ENCODE measurements at regions of chr5 and their contacts with region 1.

Region 1: DNA sequence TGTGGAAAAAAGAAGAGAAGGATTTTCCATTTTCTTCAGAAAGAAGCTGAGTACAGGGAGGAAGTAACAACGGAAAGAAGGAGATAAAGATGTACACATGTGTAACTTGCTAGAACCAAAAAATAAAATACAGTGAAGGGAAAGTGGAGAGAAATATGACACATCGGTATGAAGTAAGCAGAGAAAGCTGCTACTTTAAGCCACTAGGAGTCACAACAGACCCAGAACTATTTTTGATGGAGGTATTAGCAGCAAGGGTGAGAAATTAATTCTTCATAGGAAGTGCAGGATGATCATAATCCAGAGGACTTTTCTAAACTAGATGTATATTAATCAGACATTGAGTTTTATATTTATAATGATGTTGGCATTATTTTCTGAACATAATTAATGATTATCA is 88.5 kb downstream of the FAM174A start:
- DNase-seq: peak in 1 of 2 donors; percentile 61
- ATAC-seq: peak; percentile 58 to 74 (median 62)
- H3K4me3 ChIP-seq: no peak overlapping the region
- H3K4me3 Mint-ChIP-seq: no peak overlapping the region
- H3K27ac ChIP-seq: no peak overlapping the region
- H3K27ac Mint-ChIP-seq: no peak overlapping the region
- H3K4me1 ChIP-seq: no peaks in the 10 kb centered on the region
- H3K4me1 Mint-ChIP-seq: no peaks in the 10 kb centered on the region
- H3K27me3 ChIP-seq: no peaks in the 10 kb centered on the region
- H3K27me3 Mint-ChIP-seq: no peaks in the 10 kb centered on the region
- CTCF ChIP-seq: peak; percentile 67

Region 2: GRCh38 chr5:100595152-100595811 is 28.4 kb before region 1 on chr5:
- intact Hi-C with region 1: no loop called
- DNase-seq: no peak
- ATAC-seq: no peak
- H3K4me3 ChIP-seq: no peak overlapping the region
- H3K4me3 Mint-ChIP-seq: no peak overlapping the region
- H3K27ac ChIP-seq: no peak overlapping the region
- H3K27ac Mint-ChIP-seq: no peak overlapping the region
- H3K4me1 ChIP-seq: no peaks in the 10 kb centered on the region
- H3K4me1 Mint-ChIP-seq: peaks cover 0 to 5% of the 10 kb centered on the region in 2 donors
- H3K27me3 ChIP-seq: no peaks in the 10 kb centered on the region
- H3K27me3 Mint-ChIP-seq: peaks cover 0 to 2% of the 10 kb centered on the region in 2 donors
- CTCF ChIP-seq: no peak

Region 3: DNA sequence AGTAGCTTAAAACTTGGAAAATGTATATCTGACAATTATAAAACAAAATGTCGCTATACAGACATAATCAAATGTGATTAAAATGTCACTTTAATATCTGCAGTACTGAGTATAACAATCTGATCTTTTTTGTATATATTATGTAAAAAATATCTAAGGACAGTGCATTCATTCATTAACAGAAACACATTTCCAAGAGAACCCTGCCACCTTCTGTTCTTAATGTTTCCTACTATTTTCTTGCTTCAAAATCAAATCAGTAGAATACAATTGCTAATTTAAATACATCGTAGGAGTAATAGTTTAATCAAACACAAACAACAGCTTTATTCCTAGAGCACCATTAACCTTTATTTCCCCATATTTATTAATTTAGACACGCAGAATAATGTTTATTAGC is 422.0 kb after region 1 on chr5:
- intact Hi-C with region 1: loop called (anchors 1 kb)
- DNase-seq: peak in 1 of 2 donors; percentile 48
- ATAC-seq: no peak
- H3K4me3 ChIP-seq: no peak overlapping the region
- H3K4me3 Mint-ChIP-seq: no peak overlapping the region
- H3K27ac ChIP-seq: no peak overlapping the region
- H3K27ac Mint-ChIP-seq: no peak overlapping the region
- H3K4me1 ChIP-seq: no peaks in the 10 kb centered on the region
- H3K4me1 Mint-ChIP-seq: no peaks in the 10 kb centered on the region
- H3K27me3 ChIP-seq: no peaks in the 10 kb centered on the region
- H3K27me3 Mint-ChIP-seq: peaks cover 0 to 7% of the 10 kb centered on the region in 2 donors
- CTCF ChIP-seq: peak; percentile 38

Region 4: DNA sequence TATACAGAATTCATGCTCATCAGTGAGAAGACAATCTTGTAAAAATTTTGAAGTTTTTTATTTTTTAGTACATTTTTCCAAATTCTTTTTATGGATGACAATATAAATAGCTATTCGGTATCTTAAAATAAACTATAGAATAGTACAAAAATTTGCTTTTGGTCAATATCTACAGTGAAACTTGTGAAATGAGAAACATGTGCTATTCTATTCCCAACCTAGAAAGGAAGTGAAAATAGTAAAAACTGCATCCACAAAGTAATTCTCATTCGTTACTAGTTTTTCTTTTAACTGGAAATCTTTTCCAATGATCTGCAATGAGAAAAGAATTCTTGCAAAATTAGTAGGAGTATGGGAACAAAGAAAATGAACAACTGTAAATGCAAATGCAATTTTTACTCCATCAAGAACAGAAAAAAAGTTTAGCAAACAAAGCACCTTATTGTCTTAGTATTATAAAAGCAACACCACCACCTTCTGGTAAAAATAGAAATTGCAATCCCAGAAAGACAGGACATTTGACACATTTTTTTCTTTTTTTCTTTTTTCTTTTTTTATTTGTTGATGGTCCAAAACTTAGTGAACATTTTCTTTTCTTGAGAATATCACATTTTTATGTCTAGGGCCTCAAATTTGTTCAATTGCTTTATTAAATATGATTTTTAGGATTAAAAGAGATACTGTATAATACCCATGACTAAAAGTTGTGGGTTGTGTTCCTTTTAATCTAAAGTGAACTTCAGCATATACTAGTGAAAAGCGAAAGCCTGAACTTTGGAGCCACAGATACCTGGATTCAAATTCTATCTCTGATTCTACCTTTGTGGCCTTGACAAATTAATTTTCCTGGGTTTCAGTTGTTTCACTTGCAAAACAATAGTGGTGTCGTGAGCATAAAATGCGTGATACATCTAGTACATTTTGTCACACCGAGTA is 1600.1 kb after region 1 on chr5:
- intact Hi-C with region 1: loop called (anchors 5 kb)
- DNase-seq: peak in 1 of 2 donors; percentile 57
- ATAC-seq: peak in 1 of 3 donors; percentile 59
- H3K4me3 ChIP-seq: no peak overlapping the region
- H3K4me3 Mint-ChIP-seq: no peak overlapping the region
- H3K27ac ChIP-seq: no peak overlapping the region
- H3K27ac Mint-ChIP-seq: no peak overlapping the region
- H3K4me1 ChIP-seq: no peaks in the 10 kb centered on the region
- H3K4me1 Mint-ChIP-seq: peaks cover 3 to 4% of the 10 kb centered on the region in 2 donors
- H3K27me3 ChIP-seq: peaks cover 5% of the 10 kb centered on the region
- H3K27me3 Mint-ChIP-seq: peaks cover 4 to 12% of the 10 kb centered on the region in 2 donors
- CTCF ChIP-seq: peak; percentile 90